ENCODE measurements at regions of chr2 and their contacts with region 1.

Region 1: GRCh38 chr2:160493227-160494028 is at the start of gene RBMS1:
- DNase-seq: peak; percentile 47 to 69 (median 51)
- H3K4me3 ChIP-seq: peak within 1 kb of the TSS; percentile 49 to 64
- H3K4me3 Mint-ChIP-seq: peak within 1 kb of the TSS; percentile 91 to 98 (median 95)
- H3K27ac ChIP-seq: peak within 1 kb of the TSS; percentile 81
- H3K27ac Mint-ChIP-seq: peak within 1 kb of the TSS; percentile 85 to 97 (median 90)
- H3K4me1 ChIP-seq: peaks cover 43% of the 10 kb centered on the region
- H3K4me1 Mint-ChIP-seq: peaks cover 21 to 46% (median 32%) of the 10 kb centered on the region in 4 donors
- H3K27me3 ChIP-seq: no peaks in the 10 kb centered on the region
- H3K27me3 Mint-ChIP-seq: no peaks in the 10 kb centered on the region
- total RNA-seq, gene RBMS1: 101 to 103 TPM

Region 2: GRCh38 chr2:159518321-159519005 is 975.0 kb before region 1 on chr2:
- CTCF ChIA-PET with region 1: no interaction called
- POLR2A ChIA-PET with region 1: no interaction called
- intact Hi-C with region 1: no loop called
- DNase-seq: no peak
- H3K4me3 ChIP-seq: no peak overlapping the region
- H3K4me3 Mint-ChIP-seq: no peak overlapping the region
- H3K27ac ChIP-seq: no peak overlapping the region
- H3K27ac Mint-ChIP-seq: peak overlapping the region in 1 of 7 donors; percentile 21
- H3K4me1 ChIP-seq: peaks cover 29% of the 10 kb centered on the region
- H3K4me1 Mint-ChIP-seq: peaks cover 9 to 28% (median 17%) of the 10 kb centered on the region in 4 donors
- H3K27me3 ChIP-seq: no peaks in the 10 kb centered on the region
- H3K27me3 Mint-ChIP-seq: no peaks in the 10 kb centered on the region

Region 3: DNA sequence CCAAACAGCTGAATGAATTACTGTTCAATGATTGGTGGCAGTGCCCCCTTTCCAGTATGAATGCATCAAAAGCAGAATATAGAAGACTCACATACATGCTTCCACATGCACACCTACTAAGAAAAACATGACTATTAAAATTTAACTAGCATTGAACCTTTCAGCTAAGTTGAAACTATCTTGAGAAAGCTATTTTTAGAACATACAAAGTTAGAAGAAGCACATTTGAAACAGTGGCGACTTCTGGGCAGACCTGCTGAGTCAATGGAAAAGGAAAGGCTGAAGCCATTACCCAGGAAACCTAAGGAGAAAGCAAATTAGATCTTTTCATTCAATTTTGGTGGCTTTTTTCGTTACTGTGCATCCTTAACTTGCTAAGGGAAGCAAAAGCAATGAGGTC is 487.0 kb before region 1 on chr2:
- CTCF ChIA-PET with region 1: no interaction called
- POLR2A ChIA-PET with region 1: no interaction called
- intact Hi-C with region 1: no loop called
- DNase-seq: no peak
- H3K4me3 ChIP-seq: no peak overlapping the region
- H3K4me3 Mint-ChIP-seq: no peak overlapping the region
- H3K27ac ChIP-seq: no peak overlapping the region
- H3K27ac Mint-ChIP-seq: no peak overlapping the region
- H3K4me1 ChIP-seq: no peaks in the 10 kb centered on the region
- H3K4me1 Mint-ChIP-seq: no peaks in the 10 kb centered on the region
- H3K27me3 ChIP-seq: no peaks in the 10 kb centered on the region
- H3K27me3 Mint-ChIP-seq: peaks cover 4 to 12% of the 10 kb centered on the region in 2 donors

Region 4: DNA sequence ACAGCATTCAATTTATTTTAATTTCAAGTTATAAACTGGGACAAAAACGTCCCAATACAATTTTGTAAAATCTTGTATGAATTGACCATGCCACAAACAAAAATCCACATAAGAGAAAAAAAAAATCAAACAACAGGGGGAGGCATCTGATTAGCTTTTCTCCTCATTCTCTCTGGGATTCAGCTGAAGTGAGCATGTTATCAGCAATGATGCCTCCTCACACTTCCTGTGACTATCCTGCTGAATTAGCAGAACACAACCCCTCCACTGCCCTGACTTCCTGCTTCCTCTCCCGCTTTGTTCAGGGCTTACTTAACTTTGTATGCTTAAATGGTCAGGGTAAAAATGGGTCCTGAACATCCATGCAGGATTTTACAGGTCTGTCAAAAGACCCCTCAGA is 161.1 kb before region 1 on chr2:
- CTCF ChIA-PET with region 1: no interaction called
- POLR2A ChIA-PET with region 1: no interaction called
- intact Hi-C with region 1: loop called (anchors 5 kb)
- DNase-seq: peak in 3 of 5 donors; percentile 27 to 43 (median 29)
- H3K4me3 ChIP-seq: no peak overlapping the region
- H3K4me3 Mint-ChIP-seq: peak overlapping the region in 7 of 8 donors; percentile 32 to 78 (median 59)
- H3K27ac ChIP-seq: peak overlapping the region; percentile 6
- H3K27ac Mint-ChIP-seq: peak overlapping the region; percentile 25 to 83 (median 66)
- H3K4me1 ChIP-seq: peaks cover 93% of the 10 kb centered on the region
- H3K4me1 Mint-ChIP-seq: peaks cover 80 to 100% (median 89%) of the 10 kb centered on the region in 4 donors
- H3K27me3 ChIP-seq: no peaks in the 10 kb centered on the region
- H3K27me3 Mint-ChIP-seq: no peaks in the 10 kb centered on the region

Region 5: GRCh38 chr2:160482673-160483072 is 10.8 kb before region 1 on chr2:
- CTCF ChIA-PET with region 1: interaction called, 3 read pairs
- POLR2A ChIA-PET with region 1: interaction called, 7 read pairs
- intact Hi-C with region 1: loop called (anchors 1 kb)
- DNase-seq: peak; percentile 68 to 82 (median 77)
- H3K4me3 ChIP-seq: no peak overlapping the region
- H3K4me3 Mint-ChIP-seq: peak overlapping the region in 7 of 8 donors; percentile 53 to 84 (median 77)
- H3K27ac ChIP-seq: peak overlapping the region; percentile 39
- H3K27ac Mint-ChIP-seq: peak overlapping the region; percentile 84 to 94 (median 92)
- H3K4me1 ChIP-seq: peaks cover 77% of the 10 kb centered on the region
- H3K4me1 Mint-ChIP-seq: peaks cover 51 to 87% (median 67%) of the 10 kb centered on the region in 4 donors
- H3K27me3 ChIP-seq: no peaks in the 10 kb centered on the region
- H3K27me3 Mint-ChIP-seq: no peaks in the 10 kb centered on the region

Region 6: DNA sequence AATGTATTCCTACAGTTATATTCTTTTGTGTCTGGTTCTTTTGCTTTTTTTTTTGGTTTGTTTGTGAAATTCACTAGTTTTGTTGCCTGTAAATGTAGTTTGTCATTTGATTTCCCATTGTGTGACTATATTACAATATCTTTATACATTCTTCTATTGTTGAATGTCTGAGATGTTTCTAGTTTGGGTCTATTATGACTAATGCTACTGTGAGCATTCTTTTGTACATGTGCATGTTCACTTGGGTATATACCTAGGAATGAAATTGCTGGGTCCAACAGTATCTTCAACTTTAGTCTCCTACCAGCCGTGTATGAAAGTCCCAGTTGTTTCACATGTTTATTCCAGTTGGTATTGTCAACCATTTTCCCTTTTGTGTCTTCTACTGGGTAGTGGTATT is 112.9 kb after region 1 on chr2:
- CTCF ChIA-PET with region 1: no interaction called
- POLR2A ChIA-PET with region 1: no interaction called
- intact Hi-C with region 1: no loop called
- DNase-seq: no peak
- H3K4me3 ChIP-seq: no peak overlapping the region
- H3K4me3 Mint-ChIP-seq: no peak overlapping the region
- H3K27ac ChIP-seq: no peak overlapping the region
- H3K27ac Mint-ChIP-seq: no peak overlapping the region
- H3K4me1 ChIP-seq: peaks cover 10% of the 10 kb centered on the region
- H3K4me1 Mint-ChIP-seq: peaks cover 7 to 27% (median 8%) of the 10 kb centered on the region in 4 donors
- H3K27me3 ChIP-seq: no peaks in the 10 kb centered on the region
- H3K27me3 Mint-ChIP-seq: no peaks in the 10 kb centered on the region